Common myeloid progenitor, CD34-positive (primary cell): ENCODE measurements at regions of chr6 and their contacts with region 1.

Region 1: DNA sequence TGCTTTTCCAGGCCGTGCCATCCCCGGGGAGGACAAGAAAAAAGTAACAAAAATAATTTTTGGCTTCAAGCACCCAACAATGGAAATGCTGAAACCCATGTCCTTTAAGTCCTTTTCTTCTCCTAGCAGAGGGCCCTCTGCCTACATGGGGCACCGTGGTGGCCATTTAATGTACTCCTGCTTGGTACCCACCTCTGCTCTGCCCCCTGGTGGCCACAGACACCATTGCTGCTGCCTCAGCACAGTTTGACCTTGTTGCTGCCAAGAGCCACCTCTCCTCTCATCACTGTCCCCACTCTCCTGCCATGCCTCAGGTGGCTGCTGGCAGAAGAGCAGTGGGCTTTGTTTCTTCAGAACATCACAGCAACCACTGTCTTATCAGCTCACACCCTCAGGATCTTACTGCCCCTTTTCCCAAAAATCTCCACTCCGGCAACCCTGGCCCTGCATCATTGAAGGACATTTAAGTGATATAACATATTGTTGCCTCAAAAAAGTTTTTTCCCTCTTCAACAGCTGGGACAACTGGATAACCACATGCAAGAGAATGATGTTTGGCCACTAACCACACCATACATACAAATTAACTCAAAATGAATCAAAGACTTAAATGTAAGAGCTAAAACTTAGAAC is 12.9 kb upstream of the ARMC2 start:
- DNase-seq: peak; percentile 88 to 94 (median 91)
- H3K4me3 ChIP-seq: no peak overlapping the region
- H3K27ac ChIP-seq: no peak overlapping the region
- H3K4me1 ChIP-seq: peaks cover 15 to 22% (median 19%) of the 10 kb centered on the region in 4 experiments
- H3K27me3 ChIP-seq: no peaks in the 10 kb centered on the region

Region 2: GRCh38 chr6:108558372-108559096 is 276.8 kb before region 1 on chr6:
- CTCF ChIA-PET with region 1: interaction called, 18 read pairs
- POLR2A ChIA-PET with region 1: interaction called, 3 read pairs
- DNase-seq: peak; percentile 99 to 100 (median 100)
- H3K4me3 ChIP-seq: peak overlapping the region; percentile 92 to 99 (median 96)
- H3K27ac ChIP-seq: peak overlapping the region; percentile 90 to 93
- H3K4me1 ChIP-seq: peaks cover 9 to 52% (median 38%) of the 10 kb centered on the region in 4 experiments
- H3K27me3 ChIP-seq: no peaks in the 10 kb centered on the region

Region 3: GRCh38 chr6:108565893-108566292 is 269.4 kb before region 1 on chr6:
- CTCF ChIA-PET with region 1: interaction called, 11 read pairs
- POLR2A ChIA-PET with region 1: interaction called, 3 read pairs
- DNase-seq: peak; percentile 81 to 91 (median 90)
- H3K4me3 ChIP-seq: peak overlapping the region in 1 of 7 experiments; percentile 37
- H3K27ac ChIP-seq: peak overlapping the region in 1 of 2 experiments; percentile 72
- H3K4me1 ChIP-seq: peaks cover 35 to 54% (median 45%) of the 10 kb centered on the region in 4 experiments
- H3K27me3 ChIP-seq: no peaks in the 10 kb centered on the region

Region 4: DNA sequence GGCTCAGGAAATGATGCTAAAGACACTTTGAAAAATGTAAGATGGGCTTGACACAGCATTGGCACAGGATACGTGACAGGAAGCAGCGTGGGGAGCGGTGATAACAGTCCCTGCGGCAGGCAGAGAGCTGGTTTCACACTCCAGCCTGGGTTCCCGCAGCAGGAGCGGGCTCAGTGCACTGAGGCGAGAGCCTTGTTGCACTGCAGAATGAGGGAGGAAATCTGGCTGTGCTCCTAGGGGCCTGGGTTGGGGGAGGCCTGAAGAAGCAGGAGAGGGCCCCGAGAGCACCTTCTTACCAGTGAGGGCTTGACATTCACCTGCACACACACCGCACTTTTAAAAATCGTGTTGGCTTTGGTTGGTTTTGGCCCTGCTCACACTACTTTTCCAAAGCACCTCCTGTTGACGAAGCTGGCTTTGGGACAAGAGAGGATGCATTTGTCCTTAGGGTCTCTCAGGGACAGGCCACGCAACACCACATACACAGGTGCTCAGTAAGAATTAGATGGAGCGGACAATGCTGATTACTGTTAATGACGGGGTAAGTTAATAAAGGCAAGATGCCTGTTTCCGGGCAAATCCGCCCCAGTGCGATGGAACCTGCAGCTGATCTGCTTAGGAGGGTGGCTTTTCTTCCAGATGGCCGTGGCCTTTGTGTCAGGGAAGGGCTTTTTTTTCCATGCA is 36.5 kb before region 1 on chr6:
- CTCF ChIA-PET with region 1: interaction called, 14 read pairs
- POLR2A ChIA-PET with region 1: interaction called, 4 read pairs
- DNase-seq: peak; percentile 90 to 97 (median 93)
- H3K4me3 ChIP-seq: peak overlapping the region in 5 of 7 experiments; percentile 15 to 57 (median 44)
- H3K27ac ChIP-seq: peak overlapping the region; percentile 75 to 83
- H3K4me1 ChIP-seq: peaks cover 20 to 57% (median 55%) of the 10 kb centered on the region in 4 experiments
- H3K27me3 ChIP-seq: no peaks in the 10 kb centered on the region

Region 5: GRCh38 chr6:108847738-108848115 is 12.4 kb after region 1 on chr6:
- CTCF ChIA-PET with region 1: interaction called, 11 read pairs
- POLR2A ChIA-PET with region 1: no interaction called
- DNase-seq: no peak
- H3K4me3 ChIP-seq: peak overlapping the region; percentile 78 to 92 (median 84)
- H3K27ac ChIP-seq: peak overlapping the region in 1 of 2 experiments; percentile 84
- H3K4me1 ChIP-seq: peaks cover 10 to 37% (median 18%) of the 10 kb centered on the region in 4 experiments
- H3K27me3 ChIP-seq: no peaks in the 10 kb centered on the region

Region 6: DNA sequence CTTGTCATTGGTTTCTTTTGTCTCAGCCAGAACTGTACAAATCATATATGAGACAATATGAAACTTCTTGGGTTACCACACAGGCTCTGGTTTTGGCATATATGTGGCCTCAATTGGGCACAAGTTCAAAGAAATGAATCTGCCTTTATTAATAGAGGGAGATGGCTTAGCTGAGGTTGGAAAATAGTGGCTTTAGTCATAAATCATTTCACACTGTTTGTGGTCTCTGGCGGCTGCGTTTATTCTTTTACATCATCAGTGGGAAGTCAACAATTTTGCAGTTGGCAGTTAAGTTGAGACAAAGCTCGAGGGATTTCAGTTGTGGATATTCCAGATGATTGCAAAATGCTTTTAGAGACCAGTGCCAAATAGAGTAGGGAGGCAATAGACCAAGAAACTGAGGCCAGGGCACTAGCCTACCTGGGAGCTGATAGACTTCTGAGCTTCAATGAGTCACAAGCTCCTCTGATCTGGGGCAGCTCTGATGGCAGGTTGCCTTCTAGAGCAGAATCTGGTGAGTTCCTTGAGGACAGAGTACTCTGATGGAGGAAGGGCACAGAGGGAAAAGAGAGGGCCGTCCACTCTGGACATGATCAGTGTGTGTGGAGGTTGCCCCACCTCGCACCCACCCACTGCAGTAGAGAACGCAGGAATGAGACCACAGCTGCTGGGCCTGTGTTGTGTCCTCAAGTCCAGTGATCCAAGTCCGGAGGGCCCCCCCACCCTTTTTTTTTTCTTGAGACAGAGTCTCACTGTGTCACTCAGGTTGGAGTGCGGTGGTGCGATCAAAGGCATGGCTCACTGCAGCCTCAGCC is 86.4 kb after region 1 on chr6:
- CTCF ChIA-PET with region 1: no interaction called
- POLR2A ChIA-PET with region 1: no interaction called
- DNase-seq: peak; percentile 57 to 88 (median 86)
- H3K4me3 ChIP-seq: peak overlapping the region in 1 of 7 experiments; percentile 13
- H3K27ac ChIP-seq: no peak overlapping the region
- H3K4me1 ChIP-seq: peaks cover 5 to 27% (median 17%) of the 10 kb centered on the region in 4 experiments
- H3K27me3 ChIP-seq: no peaks in the 10 kb centered on the region